OCI-LY7 (cell line): ENCODE measurements at regions of chr1 and their contacts with region 1.

Region 1: GRCh38 chr1:206684478-206685333 is at the start of gene MAPKAPK2:
- DNase-seq: peak; percentile 87
- H3K4me3 ChIP-seq: peak within 1 kb of the TSS; percentile 82
- H3K27ac ChIP-seq: no peak within 1 kb of the TSS
- H3K4me1 ChIP-seq: peaks cover 66% of the 10 kb centered on the region
- CTCF ChIP-seq: no peak
- total RNA-seq, gene MAPKAPK2: 14.5 and 16.3 TPM in 2 replicates

Region 2: DNA sequence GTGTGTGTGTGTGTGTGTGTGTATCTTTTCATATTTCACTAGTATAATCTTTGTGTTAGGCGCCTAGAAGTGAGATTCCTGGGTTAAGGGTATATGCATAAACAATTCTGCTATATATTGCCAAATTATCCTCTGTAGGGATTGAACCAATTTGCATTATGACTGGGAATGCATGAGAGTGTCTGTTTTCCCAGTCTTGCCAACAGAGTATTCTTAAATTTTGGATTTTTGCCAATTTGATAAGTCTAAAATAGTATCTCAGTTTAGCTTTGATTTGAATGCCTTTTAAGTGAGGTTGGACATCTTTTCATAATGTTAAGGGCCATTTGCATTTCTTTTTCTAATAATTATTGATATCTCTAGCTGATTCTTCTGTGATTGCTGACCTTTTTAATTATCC is 559.4 kb before region 1 on chr1:
- CTCF ChIA-PET with region 1: no interaction called
- POLR2A ChIA-PET with region 1: no interaction called
- intact Hi-C with region 1: no loop called
- DNase-seq: no peak
- H3K4me3 ChIP-seq: no peak overlapping the region
- H3K27ac ChIP-seq: no peak overlapping the region
- H3K4me1 ChIP-seq: no peaks in the 10 kb centered on the region
- CTCF ChIP-seq: no peak

Region 3: DNA sequence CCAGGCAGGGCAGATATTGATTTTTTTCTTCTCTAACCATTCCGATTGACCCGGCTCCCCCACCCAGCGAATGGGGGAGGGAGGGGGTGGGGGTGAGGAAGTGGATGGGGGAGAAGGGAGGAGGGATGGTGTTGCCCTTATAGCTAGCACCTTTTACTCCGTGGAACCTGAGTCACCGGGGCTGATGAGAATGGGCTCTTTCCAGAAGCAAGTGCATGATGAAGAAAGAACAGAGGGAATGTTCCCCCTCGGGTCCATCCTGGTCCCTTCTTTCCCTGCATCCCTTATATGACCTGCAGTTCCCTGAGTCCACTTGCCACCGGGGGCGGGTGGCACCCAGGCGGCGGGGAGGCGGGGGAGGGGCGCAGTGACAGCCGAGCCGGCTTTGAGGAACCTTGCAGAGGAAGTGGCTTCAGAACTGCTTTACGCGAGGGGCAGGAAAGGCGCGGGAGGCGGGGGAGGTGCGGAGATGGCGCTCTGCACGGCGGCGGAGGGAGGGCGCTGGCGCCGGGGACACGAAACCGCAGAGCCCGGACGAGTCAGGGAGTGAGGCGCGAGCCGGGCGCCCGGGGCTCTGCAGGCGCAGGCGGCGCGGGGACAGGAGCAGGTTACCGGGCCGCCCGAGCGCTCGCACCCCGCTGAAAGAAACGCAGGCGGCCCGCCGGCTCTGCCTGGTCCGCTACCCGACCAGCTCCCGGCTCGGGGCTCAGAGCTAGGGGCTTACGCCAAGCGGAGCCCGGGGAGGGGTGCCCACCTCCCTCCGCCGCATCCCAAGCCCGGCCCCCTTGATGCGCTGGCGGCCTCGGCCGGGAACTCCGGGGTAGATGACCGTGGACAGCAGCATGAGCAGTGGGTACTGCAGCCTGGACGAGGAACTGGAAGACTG is 127.7 kb before region 1 on chr1:
- CTCF ChIA-PET with region 1: no interaction called
- POLR2A ChIA-PET with region 1: no interaction called
- intact Hi-C with region 1: loop called (anchors 5 kb)
- DNase-seq: peak; percentile 88
- H3K4me3 ChIP-seq: peak overlapping the region; percentile 92
- H3K27ac ChIP-seq: peak overlapping the region; percentile 72
- H3K4me1 ChIP-seq: peaks cover 57% of the 10 kb centered on the region
- CTCF ChIP-seq: peak; percentile 34; the same call in 1 of the 2 replicates

Region 4: GRCh38 chr1:206658264-206658980 is 26.3 kb before region 1 on chr1:
- CTCF ChIA-PET with region 1: interaction called, 11 read pairs
- POLR2A ChIA-PET with region 1: interaction called, 3 read pairs
- intact Hi-C with region 1: loop called (anchors 1 kb)
- DNase-seq: peak; percentile 82
- H3K4me3 ChIP-seq: peak overlapping the region; percentile 44
- H3K27ac ChIP-seq: peak overlapping the region; percentile 22
- H3K4me1 ChIP-seq: peaks cover 18% of the 10 kb centered on the region
- CTCF ChIP-seq: peak; percentile 98

Region 5: DNA sequence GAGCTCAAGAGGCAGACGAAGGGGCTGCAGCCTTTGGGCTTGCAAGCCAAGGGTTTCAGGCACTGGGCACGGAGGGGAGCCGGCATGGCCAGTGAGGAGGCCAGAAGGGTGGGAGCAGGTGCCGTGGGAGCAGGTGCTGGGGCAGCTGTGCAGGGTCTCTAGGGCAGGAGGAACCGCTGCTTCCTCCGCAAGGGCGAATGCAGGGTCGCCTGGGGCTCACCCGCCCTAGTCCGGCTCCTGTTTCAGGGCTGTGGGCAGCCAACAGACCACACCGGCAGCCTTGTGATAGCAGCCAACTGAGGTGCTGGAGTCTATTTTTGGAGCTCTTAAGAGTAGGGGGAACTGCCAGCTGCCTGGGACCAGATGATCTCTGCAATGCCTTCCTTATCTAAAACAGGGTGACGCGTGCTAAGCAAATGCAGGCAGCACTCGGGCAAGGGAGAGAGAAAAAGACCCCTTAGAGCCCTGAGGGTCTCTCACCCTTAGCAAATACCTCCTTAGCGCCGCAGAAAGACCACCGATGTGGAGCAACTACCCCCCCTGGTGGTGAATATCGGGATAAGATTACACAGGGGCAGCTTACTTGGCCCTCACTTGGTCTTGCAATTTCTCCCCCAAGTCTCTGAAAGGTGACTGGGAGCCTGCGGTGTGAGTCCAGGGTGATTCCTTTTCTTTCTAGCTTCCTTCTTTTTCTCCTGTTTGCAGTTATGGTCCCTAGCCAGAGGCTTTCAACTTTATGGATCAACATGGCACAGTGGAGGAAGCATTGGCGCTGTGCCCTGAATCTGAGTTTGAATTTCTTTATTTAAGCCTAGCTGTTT is 20.7 kb before region 1 on chr1:
- CTCF ChIA-PET with region 1: interaction called, 11 read pairs
- POLR2A ChIA-PET with region 1: interaction called, 4 read pairs
- intact Hi-C with region 1: loop called (anchors 1 kb)
- DNase-seq: peak; percentile 81
- H3K4me3 ChIP-seq: no peak overlapping the region
- H3K27ac ChIP-seq: no peak overlapping the region
- H3K4me1 ChIP-seq: peaks cover 18% of the 10 kb centered on the region
- CTCF ChIP-seq: peak; percentile 92

Region 6: DNA sequence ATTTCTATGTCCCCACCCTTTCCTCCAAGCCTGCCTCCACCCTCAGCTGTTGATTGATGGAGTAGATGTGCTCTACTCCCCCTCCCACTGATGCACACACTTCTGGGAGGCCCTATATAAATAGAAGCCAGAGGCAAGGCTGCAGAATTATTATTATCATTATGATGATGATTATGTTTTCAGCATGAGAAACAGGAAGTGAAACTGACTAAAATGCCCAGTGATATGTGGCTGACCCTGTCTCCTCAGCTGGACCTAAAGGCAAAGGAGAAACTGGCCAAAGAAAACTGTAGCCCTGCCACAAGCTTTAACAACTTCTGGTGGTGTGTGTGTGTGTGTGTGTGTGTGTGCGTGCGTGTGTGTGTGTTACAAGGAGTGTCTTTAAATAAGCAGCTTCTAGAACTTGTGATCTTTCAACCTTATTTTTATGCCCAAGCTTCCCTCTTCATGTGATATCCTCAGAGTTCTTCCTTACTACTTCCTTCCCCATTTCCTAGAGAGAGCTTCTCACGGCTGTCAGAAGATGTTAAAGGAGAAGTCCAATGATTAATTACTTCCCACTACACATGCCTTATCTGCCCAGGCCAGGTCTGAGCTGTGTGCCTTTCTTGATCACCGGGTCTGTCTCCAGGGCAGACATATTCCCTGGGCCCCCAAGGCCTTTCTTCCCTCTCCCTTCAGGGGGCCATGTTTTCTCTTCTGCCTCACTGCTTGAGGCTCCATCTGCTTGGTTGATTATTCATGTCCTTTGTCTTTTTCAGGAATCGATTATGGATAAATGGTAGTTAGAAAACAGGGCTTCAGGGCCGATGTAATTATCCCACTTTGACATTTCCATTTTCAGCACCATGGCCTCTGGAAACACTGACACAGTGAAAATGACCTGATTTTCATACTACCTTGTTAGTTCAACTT is 11.6 kb before region 1 on chr1:
- CTCF ChIA-PET with region 1: interaction called, 3 read pairs
- POLR2A ChIA-PET with region 1: interaction called, 11 read pairs
- intact Hi-C with region 1: no loop called
- DNase-seq: peak; percentile 45
- H3K4me3 ChIP-seq: no peak overlapping the region
- H3K27ac ChIP-seq: no peak overlapping the region
- H3K4me1 ChIP-seq: peaks cover 41% of the 10 kb centered on the region
- CTCF ChIP-seq: no peak

Region 7: GRCh38 chr1:206708058-206708457 is 23.4 kb after region 1 on chr1:
- CTCF ChIA-PET with region 1: no interaction called
- POLR2A ChIA-PET with region 1: interaction called, 5 read pairs
- intact Hi-C with region 1: loop called (anchors 1 kb)
- DNase-seq: no peak
- H3K4me3 ChIP-seq: no peak overlapping the region
- H3K27ac ChIP-seq: no peak overlapping the region
- H3K4me1 ChIP-seq: peaks cover 19% of the 10 kb centered on the region
- CTCF ChIP-seq: no peak

Region 8: GRCh38 chr1:206761159-206761768 is 76.6 kb after region 1 on chr1:
- CTCF ChIA-PET with region 1: no interaction called
- POLR2A ChIA-PET with region 1: no interaction called
- intact Hi-C with region 1: no loop called
- DNase-seq: no peak
- H3K4me3 ChIP-seq: no peak overlapping the region
- H3K27ac ChIP-seq: no peak overlapping the region
- H3K4me1 ChIP-seq: peaks cover 9% of the 10 kb centered on the region
- CTCF ChIP-seq: no peak